H1 (cell line): ENCODE measurements at regions of chr16 and their contacts with region 1.

Region 1: GRCh38 chr16:75238132-75238852 is 13.1 kb downstream of the BCAR1 start:
- DNase-seq: no peak
- H3K4me3 ChIP-seq: no peak overlapping the region
- H3K27ac ChIP-seq: peak overlapping the region; percentile 49; the same call in 1 of the 2 replicates
- H3K4me1 ChIP-seq: peaks cover 0 to 6% (median 2%) of the 10 kb centered on the region in 4 experiments; a peak in 2 of 7 replicates
- H3K27me3 ChIP-seq: no peaks in the 10 kb centered on the region
- CTCF ChIP-seq: no peak
- EP300 ChIP-seq: no peak
- POLR2A ChIP-seq: no peak
- RAD21 ChIP-seq: no peak

Region 2: DNA sequence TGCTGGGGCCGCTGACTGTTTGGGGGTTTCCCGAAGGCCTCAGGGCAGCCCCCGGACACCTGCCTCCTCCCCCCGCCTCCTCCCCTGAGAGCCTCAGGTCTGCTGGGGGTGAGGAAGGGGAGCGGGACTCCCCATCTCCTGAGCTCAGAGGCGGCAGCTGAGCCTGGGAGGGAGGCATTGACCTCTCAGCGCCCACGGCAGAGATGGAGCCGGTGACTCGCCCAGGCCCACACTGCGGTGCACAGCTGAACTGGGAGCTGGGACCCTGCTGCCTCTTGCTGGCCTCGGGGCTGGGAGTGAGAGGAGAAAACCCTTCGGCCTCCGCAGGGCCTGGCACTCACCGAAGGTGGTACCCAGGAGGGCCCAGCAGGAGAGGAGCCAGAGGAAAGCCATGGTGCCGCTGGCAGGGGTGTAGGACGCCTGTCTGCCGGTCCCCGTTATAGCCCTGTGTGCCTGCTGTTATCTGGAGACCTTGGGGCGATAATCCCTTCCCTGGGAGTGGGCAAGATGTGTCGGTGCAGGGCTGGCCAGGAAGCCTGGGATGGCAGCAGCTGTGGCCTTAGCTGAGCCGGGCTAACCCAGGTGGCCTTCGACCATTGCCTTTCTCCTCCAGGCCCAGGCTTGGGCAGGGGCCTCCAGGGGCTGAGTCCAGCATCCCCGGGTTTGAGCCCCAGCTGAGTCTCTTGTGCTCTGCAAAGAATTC is 31.4 kb before region 1 on chr16 and contains the start of gene CTRB2:
- CTCF ChIA-PET with region 1: interaction called, 57 read pairs
- POLR2A ChIA-PET with region 1: interaction called, 10 read pairs
- DNase-seq: no peak
- H3K4me3 ChIP-seq: no peak within 1 kb of the TSS
- H3K27ac ChIP-seq: no peak within 1 kb of the TSS
- H3K4me1 ChIP-seq: no peaks in the 10 kb centered on the region; a peak in 1 of 7 replicates
- H3K27me3 ChIP-seq: no peaks in the 10 kb centered on the region
- CTCF ChIP-seq: no peak
- EP300 ChIP-seq: no peak
- POLR2A ChIP-seq: no peak
- RAD21 ChIP-seq: no peak
- total RNA-seq, gene CTRB2: not detected in 2 replicates

Region 3: GRCh38 chr16:75224306-75225091 is 13.8 kb before region 1 on chr16:
- CTCF ChIA-PET with region 1: interaction called, 17 read pairs
- POLR2A ChIA-PET with region 1: interaction called, 375 read pairs
- DNase-seq: no peak
- H3K4me3 ChIP-seq: no peak overlapping the region
- H3K27ac ChIP-seq: no peak overlapping the region
- H3K4me1 ChIP-seq: peaks cover 0 to 4% (median 0%) of the 10 kb centered on the region in 4 experiments; a peak in 1 of 7 replicates
- H3K27me3 ChIP-seq: no peaks in the 10 kb centered on the region
- CTCF ChIP-seq: no peak
- EP300 ChIP-seq: no peak
- POLR2A ChIP-seq: no peak
- RAD21 ChIP-seq: no peak

Region 4: GRCh38 chr16:75265845-75266701 is 27.8 kb after region 1 on chr16:
- CTCF ChIA-PET with region 1: interaction called, 20 read pairs
- POLR2A ChIA-PET with region 1: interaction called, 8 read pairs
- DNase-seq: peak in 1 of 2 experiments; percentile 93
- H3K4me3 ChIP-seq: peak overlapping the region; percentile 76 to 99 (median 83)
- H3K27ac ChIP-seq: no peak overlapping the region; the same call in 1 of the 2 replicates
- H3K4me1 ChIP-seq: peaks cover 0 to 31% (median 23%) of the 10 kb centered on the region in 4 experiments; a peak in 6 of 7 replicates
- H3K27me3 ChIP-seq: no peaks in the 10 kb centered on the region
- CTCF ChIP-seq: no peak
- EP300 ChIP-seq: no peak
- POLR2A ChIP-seq: peak in 1 of 2 experiments; percentile 65; a peak in 2 of 3 replicates
- RAD21 ChIP-seq: peak; percentile 40 to 44

Region 5: GRCh38 chr16:75279305-75279704 is 41.0 kb after region 1 on chr16:
- CTCF ChIA-PET with region 1: interaction called, 23 read pairs
- POLR2A ChIA-PET with region 1: interaction called, 3 read pairs
- DNase-seq: no peak
- H3K4me3 ChIP-seq: no peak overlapping the region
- H3K27ac ChIP-seq: no peak overlapping the region
- H3K4me1 ChIP-seq: no peaks in the 10 kb centered on the region
- H3K27me3 ChIP-seq: no peaks in the 10 kb centered on the region
- CTCF ChIP-seq: no peak
- EP300 ChIP-seq: no peak
- POLR2A ChIP-seq: no peak
- RAD21 ChIP-seq: no peak

Region 6: GRCh38 chr16:75319513-75320411 is 81.5 kb after region 1 on chr16:
- CTCF ChIA-PET with region 1: interaction called, 14 read pairs
- POLR2A ChIA-PET with region 1: interaction called, 4 read pairs
- DNase-seq: no peak
- H3K4me3 ChIP-seq: no peak overlapping the region
- H3K27ac ChIP-seq: no peak overlapping the region
- H3K4me1 ChIP-seq: peaks cover 0 to 2% (median 0%) of the 10 kb centered on the region in 4 experiments; a peak in 1 of 7 replicates
- H3K27me3 ChIP-seq: no peaks in the 10 kb centered on the region
- CTCF ChIP-seq: no peak
- EP300 ChIP-seq: no peak
- POLR2A ChIP-seq: no peak
- RAD21 ChIP-seq: no peak

Region 7: DNA sequence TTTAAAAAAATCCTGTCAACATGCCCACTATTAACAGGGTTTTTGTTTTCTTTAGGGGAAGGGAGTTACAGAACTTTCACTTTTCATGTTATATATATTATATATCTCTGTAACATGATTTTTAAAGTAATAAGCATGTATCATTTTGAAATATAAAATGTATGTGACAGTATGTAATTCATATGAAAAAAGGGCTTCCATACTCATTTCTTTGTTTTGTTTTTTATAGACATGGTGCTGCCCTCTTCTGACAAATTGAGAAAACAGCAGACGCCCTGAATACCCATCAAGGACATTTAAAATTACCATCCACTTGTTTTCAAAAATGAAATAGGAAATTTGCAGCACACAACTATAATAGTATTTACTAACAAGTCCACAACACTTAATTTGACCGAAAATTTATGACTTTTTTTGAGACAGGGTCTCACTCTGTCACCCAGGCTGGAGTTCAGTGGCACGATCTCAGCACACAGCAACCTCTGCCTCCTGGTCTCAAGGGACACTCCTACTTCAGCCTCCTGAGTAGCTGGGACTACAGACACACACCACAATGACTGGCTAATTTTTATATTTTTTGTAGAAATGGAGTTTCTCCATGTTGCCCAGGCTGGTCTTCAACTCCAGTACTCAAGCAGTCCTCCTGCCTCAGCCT is 164.7 kb after region 1 on chr16:
- CTCF ChIA-PET with region 1: interaction called, 10 read pairs
- POLR2A ChIA-PET with region 1: no interaction called
- DNase-seq: no peak
- H3K4me3 ChIP-seq: no peak overlapping the region
- H3K27ac ChIP-seq: no peak overlapping the region
- H3K4me1 ChIP-seq: no peaks in the 10 kb centered on the region
- H3K27me3 ChIP-seq: no peaks in the 10 kb centered on the region
- CTCF ChIP-seq: peak in 2 of 3 experiments; percentile 13 to 57; a peak in 2 of 4 replicates
- EP300 ChIP-seq: no peak
- POLR2A ChIP-seq: no peak
- RAD21 ChIP-seq: peak; percentile 26 to 33; a peak in 3 of 4 replicates